ENCODE measurements at regions of chr17 and their contacts with region 1.

Region 1: GRCh38 chr17:38550661-38551060 is 55.1 kb downstream of the SRCIN1 start:
- DNase-seq: no peak
- ATAC-seq: no peak
- H3K4me3 ChIP-seq: no peak overlapping the region
- H3K27ac ChIP-seq: no peak overlapping the region
- H3K4me1 ChIP-seq: peaks cover 9% of the 10 kb centered on the region
- H3K27me3 ChIP-seq: 0 out of 5 replicates have a peak, but pooled peaks cover 2 to 5% of the 10 kb centered on the region in 2 experiments
- CTCF ChIP-seq: no peak
- EP300 ChIP-seq: no peak
- POLR2A ChIP-seq: no peak
- RAD21 ChIP-seq: no peak

Region 2: GRCh38 chr17:38405654-38406053 is 145.0 kb before region 1 on chr17:
- CTCF ChIA-PET with region 1: no interaction called
- POLR2A ChIA-PET with region 1: no interaction called
- in situ Hi-C with region 1: no loop called
- intact Hi-C with region 1: no loop called
- DNase-seq: no peak
- ATAC-seq: no peak
- H3K4me3 ChIP-seq: no peak overlapping the region
- H3K27ac ChIP-seq: no peak overlapping the region
- H3K4me1 ChIP-seq: no peaks in the 10 kb centered on the region
- H3K27me3 ChIP-seq: peaks cover 0 to 4% of the 10 kb centered on the region in 2 experiments; a peak in 1 of 5 replicates
- CTCF ChIP-seq: no peak
- EP300 ChIP-seq: no peak
- POLR2A ChIP-seq: no peak
- RAD21 ChIP-seq: no peak

Region 3: DNA sequence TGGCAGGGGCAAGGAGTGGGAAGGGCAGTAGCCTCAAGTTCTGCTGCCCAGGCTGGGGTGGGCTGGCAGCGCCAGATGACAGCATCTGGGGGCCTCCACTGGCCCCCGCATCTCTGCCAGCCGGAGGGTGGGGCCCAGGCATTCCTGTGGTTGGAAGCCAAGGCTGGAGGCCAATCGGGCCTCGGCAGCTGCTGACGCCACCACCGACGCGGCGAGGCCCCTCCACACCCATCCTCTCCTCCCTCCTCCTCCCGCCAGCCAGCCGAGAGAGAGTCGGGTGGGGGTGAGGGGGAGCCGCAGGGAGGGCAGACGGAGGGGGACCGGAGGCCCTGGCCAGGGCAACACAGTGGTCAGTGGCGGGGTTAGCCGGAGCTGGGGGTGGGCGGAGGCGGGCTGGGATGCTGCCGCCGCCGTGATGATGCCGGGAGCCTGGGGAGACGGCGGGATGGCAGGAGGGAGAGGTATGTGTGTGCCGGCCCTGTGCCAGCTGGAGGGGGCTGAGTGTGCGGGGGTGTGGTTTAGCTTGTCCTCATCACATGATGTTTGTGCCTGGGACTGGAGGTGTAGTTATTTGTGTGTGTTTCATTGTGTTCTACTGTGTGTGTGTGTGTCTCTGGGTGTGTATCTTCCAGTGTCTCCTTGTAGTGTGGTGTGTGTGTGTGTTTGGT is 85.8 kb before region 1 on chr17:
- CTCF ChIA-PET with region 1: no interaction called
- POLR2A ChIA-PET with region 1: no interaction called
- in situ Hi-C with region 1: no loop called
- intact Hi-C with region 1: no loop called
- DNase-seq: no peak
- ATAC-seq: peak; percentile 3; the same call in 1 of the 3 replicates
- H3K4me3 ChIP-seq: peak overlapping the region in 1 of 3 experiments; percentile 10; a peak in 1 of 6 replicates
- H3K27ac ChIP-seq: no peak overlapping the region
- H3K4me1 ChIP-seq: no peaks in the 10 kb centered on the region
- H3K27me3 ChIP-seq: peaks cover 37 to 94% of the 10 kb centered on the region in 2 experiments
- CTCF ChIP-seq: no peak
- EP300 ChIP-seq: no peak
- POLR2A ChIP-seq: no peak
- RAD21 ChIP-seq: no peak

Region 4: GRCh38 chr17:38584350-38584925 is 33.8 kb after region 1 on chr17:
- CTCF ChIA-PET with region 1: no interaction called
- POLR2A ChIA-PET with region 1: no interaction called
- in situ Hi-C with region 1: loop called (anchors 5 kb)
- intact Hi-C with region 1: no loop called
- DNase-seq: peak; percentile 41
- ATAC-seq: peak; percentile 73
- H3K4me3 ChIP-seq: peak overlapping the region in 1 of 3 experiments; percentile 47; a peak in 1 of 6 replicates
- H3K27ac ChIP-seq: no peak overlapping the region
- H3K4me1 ChIP-seq: peaks cover 49% of the 10 kb centered on the region
- H3K27me3 ChIP-seq: peaks cover 0 to 25% of the 10 kb centered on the region in 2 experiments; a peak in 3 of 5 replicates
- CTCF ChIP-seq: peak; percentile 94
- EP300 ChIP-seq: no peak
- POLR2A ChIP-seq: no peak
- RAD21 ChIP-seq: peak; percentile 91

Measured in HepG2 (cell line).